ENCODE measurements at regions of chr7 and their contacts with region 1.

Region 1: DNA sequence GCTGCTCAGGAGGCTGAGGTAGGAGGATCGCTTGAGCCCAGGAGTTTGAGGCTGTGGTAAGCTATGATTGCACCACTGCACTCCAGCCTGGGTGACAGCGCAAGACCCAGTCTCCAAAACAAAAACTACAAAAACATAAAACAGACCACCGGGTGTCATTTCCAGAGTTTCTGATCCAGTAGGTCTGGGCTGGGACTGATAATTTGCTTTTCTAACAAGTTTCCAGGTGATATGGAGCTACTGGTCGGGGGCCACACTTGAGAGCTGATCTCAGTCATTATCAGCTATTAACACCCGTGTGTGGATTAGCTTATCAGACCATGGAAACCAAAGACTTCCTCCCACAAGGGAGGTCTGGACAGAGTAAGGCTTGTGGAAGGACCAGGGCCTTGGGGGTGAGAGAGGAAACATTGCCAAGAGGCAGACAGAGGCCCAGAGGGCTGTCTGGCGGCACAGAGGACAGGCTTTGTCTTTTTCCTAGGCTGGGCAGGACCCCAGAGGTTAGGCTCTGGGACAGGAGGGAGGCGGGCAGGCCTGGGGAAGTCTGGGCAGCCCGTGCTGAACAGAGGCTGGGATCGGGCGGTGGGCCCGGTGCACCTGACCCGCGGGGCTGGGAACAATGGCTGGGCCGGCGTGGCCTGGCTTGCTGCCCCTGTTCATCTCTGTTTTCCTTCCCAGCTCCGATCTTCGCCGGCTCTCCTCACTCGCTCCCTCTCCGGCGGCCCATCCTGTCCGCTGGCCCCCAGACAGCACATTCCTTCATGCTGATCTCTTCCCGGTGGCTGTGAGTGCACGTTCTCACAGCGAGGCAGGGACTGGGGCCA is 25.2 kb downstream of the TMEM270 start:
- DNase-seq: peak in 3 of 4 donors; percentile 20 to 36 (median 35)
- ATAC-seq: peak; percentile 36
- H3K4me3 ChIP-seq: no peak overlapping the region
- H3K27ac ChIP-seq: peak overlapping the region in 1 of 4 donors; percentile 18
- H3K4me1 ChIP-seq: no peaks in the 10 kb centered on the region
- H3K27me3 ChIP-seq: no peaks in the 10 kb centered on the region
- CTCF ChIP-seq: no peak
- POLR2A ChIP-seq: no peak

Region 2: DNA sequence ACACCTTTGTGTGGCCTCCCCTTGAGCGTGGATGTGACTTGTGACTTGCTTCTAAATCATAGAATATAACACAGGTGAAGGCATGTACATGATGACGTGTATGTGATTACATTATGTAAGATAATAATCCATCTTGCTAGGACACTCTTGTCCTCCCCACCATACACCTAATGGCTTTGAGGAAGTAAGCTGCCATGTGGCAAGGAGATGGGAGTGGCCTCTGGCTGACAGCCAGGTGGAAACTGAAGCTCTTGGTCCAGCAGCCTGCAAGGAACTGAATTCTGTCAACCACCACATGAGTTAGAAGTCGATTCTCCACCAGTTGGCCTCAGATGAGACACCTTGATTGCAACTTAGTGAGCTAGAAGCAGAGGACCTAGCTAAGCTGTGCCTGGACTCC is 74.4 kb after region 1 on chr7:
- intact Hi-C with region 1: loop called (anchors 10 kb)
- DNase-seq: peak in 1 of 4 donors; percentile 31
- ATAC-seq: no peak
- H3K4me3 ChIP-seq: no peak overlapping the region
- H3K27ac ChIP-seq: no peak overlapping the region
- H3K4me1 ChIP-seq: no peaks in the 10 kb centered on the region
- H3K27me3 ChIP-seq: no peaks in the 10 kb centered on the region
- CTCF ChIP-seq: no peak
- POLR2A ChIP-seq: no peak

Measured in body of pancreas (tissue), 4 donors.